Activated T-helper 1 cell treated with anti-CD3 and anti-CD28 coated beads, Interleukin-12 subunit alpha, Interleukin-12 subunit beta, Interleukin-2, Interleukin-4 antibody, amounts not matched to agents 30 ng/mL and 10 ng/mL and 1 ng/mL, durations not matched to agents 14 hours and 24 hours and 36 hours (primary cell): ENCODE measurements at regions of chr9 and their contacts with region 1.

Region 1: GRCh38 chr9:28215536-28216299 is 642.4 kb upstream of the C9orf72 start:
- DNase-seq: no peak
- H3K4me3 Mint-ChIP-seq: no peak overlapping the region
- H3K27ac Mint-ChIP-seq: no peak overlapping the region
- H3K4me1 Mint-ChIP-seq: no peaks in the 10 kb centered on the region
- H3K27me3 Mint-ChIP-seq: no peaks in the 10 kb centered on the region

Region 2: GRCh38 chr9:27817747-27818146 is 398.0 kb before region 1 on chr9:
- intact Hi-C with region 1: no loop called
- DNase-seq: no peak
- H3K4me3 Mint-ChIP-seq: no peak overlapping the region
- H3K27ac Mint-ChIP-seq: no peak overlapping the region
- H3K4me1 Mint-ChIP-seq: no peaks in the 10 kb centered on the region
- H3K27me3 Mint-ChIP-seq: peaks cover 3% of the 10 kb centered on the region

Region 3: GRCh38 chr9:27835286-27835685 is 380.4 kb before region 1 on chr9:
- intact Hi-C with region 1: no loop called
- DNase-seq: no peak
- H3K4me3 Mint-ChIP-seq: no peak overlapping the region
- H3K27ac Mint-ChIP-seq: no peak overlapping the region
- H3K4me1 Mint-ChIP-seq: no peaks in the 10 kb centered on the region
- H3K27me3 Mint-ChIP-seq: no peaks in the 10 kb centered on the region

Region 4: GRCh38 chr9:27954858-27955257 is 260.9 kb before region 1 on chr9:
- intact Hi-C with region 1: loop called (anchors 5 kb)
- DNase-seq: no peak
- H3K4me3 Mint-ChIP-seq: no peak overlapping the region
- H3K27ac Mint-ChIP-seq: no peak overlapping the region
- H3K4me1 Mint-ChIP-seq: no peaks in the 10 kb centered on the region
- H3K27me3 Mint-ChIP-seq: no peaks in the 10 kb centered on the region

Region 5: GRCh38 chr9:28234894-28235277 is 19.2 kb after region 1 on chr9:
- intact Hi-C with region 1: no loop called
- DNase-seq: no peak
- H3K4me3 Mint-ChIP-seq: no peak overlapping the region
- H3K27ac Mint-ChIP-seq: no peak overlapping the region
- H3K4me1 Mint-ChIP-seq: no peaks in the 10 kb centered on the region
- H3K27me3 Mint-ChIP-seq: no peaks in the 10 kb centered on the region